ENCODE measurements at regions of chr2 and their contacts with region 1.

Region 1: GRCh38 chr2:203740780-203741281 is 34.4 kb downstream of the CD28 start:
- DNase-seq: peak; percentile 66
- ATAC-seq: peak; percentile 64
- H3K4me3 Mint-ChIP-seq: peak overlapping the region; percentile 54
- H3K27ac Mint-ChIP-seq: peak overlapping the region; percentile 99
- H3K4me1 Mint-ChIP-seq: peaks cover 88% of the 10 kb centered on the region
- H3K27me3 Mint-ChIP-seq: no peaks in the 10 kb centered on the region
- CTCF ChIP-seq: no peak

Region 2: GRCh38 chr2:203446071-203446481 is 294.8 kb before region 1 on chr2:
- CTCF ChIA-PET with region 1: no interaction called
- POLR2A ChIA-PET with region 1: no interaction called
- intact Hi-C with region 1: no loop called
- DNase-seq: no peak
- ATAC-seq: no peak
- H3K4me3 Mint-ChIP-seq: no peak overlapping the region
- H3K27ac Mint-ChIP-seq: no peak overlapping the region
- H3K4me1 Mint-ChIP-seq: peaks cover 6% of the 10 kb centered on the region
- H3K27me3 Mint-ChIP-seq: no peaks in the 10 kb centered on the region
- CTCF ChIP-seq: no peak

Region 3: DNA sequence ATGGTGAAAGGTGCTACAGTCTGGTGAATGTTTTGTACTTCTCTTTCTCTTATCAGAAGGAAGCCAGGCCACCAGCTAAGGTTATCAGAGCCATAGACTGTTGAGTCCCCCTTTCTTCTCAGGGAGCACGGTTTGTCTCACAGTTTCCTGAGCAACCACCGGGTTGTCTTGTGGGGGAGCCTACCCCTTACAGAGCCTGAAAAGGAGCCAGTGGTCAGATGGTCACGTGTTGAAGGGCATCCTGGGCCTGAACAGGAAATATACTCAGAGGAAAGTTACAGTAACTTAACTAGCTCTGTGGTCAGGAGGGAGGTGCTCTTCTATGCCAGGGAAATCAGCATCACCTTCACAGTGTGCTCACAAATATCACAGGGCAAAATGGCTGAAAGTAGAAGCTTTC is 22.7 kb before region 1 on chr2:
- CTCF ChIA-PET with region 1: interaction called, 15 read pairs
- POLR2A ChIA-PET with region 1: interaction called, 184 read pairs
- intact Hi-C with region 1: no loop called
- DNase-seq: peak; percentile 90
- ATAC-seq: peak; percentile 80
- H3K4me3 Mint-ChIP-seq: peak overlapping the region; percentile 43
- H3K27ac Mint-ChIP-seq: peak overlapping the region; percentile 88
- H3K4me1 Mint-ChIP-seq: peaks cover 96% of the 10 kb centered on the region
- H3K27me3 Mint-ChIP-seq: no peaks in the 10 kb centered on the region
- CTCF ChIP-seq: no peak

Region 4: GRCh38 chr2:203751685-203752271 is 10.9 kb after region 1 on chr2:
- CTCF ChIA-PET with region 1: interaction called, 10 read pairs
- POLR2A ChIA-PET with region 1: interaction called, 27 read pairs
- intact Hi-C with region 1: no loop called
- DNase-seq: no peak
- ATAC-seq: no peak
- H3K4me3 Mint-ChIP-seq: no peak overlapping the region
- H3K27ac Mint-ChIP-seq: peak overlapping the region; percentile 66
- H3K4me1 Mint-ChIP-seq: peaks cover 49% of the 10 kb centered on the region
- H3K27me3 Mint-ChIP-seq: no peaks in the 10 kb centered on the region
- CTCF ChIP-seq: no peak

Region 5: DNA sequence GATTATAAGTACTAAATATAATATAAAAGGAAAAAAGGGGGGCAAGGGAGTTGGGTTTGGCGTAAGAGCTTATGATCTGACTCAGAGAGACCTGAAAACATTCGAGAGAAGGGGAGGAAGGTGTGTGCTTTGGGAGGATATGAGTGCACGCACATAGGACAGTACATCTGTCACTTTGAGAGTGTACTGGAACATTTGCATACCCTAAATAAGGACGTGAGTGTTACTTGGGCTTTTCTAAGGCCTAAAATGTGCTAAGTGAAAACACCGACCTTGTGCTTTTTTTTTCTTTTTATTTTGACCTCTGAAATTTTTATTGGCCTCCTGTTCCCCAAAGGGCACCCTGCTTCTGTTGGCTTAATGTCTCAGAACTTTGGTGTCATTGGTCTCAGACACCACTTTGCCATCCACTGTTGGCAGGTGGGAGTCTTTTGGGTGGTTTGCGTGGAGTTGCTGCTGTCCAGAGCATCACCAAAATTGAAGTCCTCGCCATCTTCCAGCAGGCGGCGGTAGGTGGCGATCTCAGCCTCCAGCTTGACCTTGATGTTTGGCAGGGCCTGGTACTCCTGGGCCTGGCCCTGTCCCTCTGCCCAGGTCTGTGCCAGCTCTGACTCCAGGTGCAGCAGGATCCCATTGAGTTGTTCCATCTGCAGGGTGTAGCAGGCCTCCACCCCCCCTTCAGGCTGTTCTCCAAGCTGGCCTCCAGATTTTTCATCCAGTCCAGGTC is 23.3 kb after region 1 on chr2:
- CTCF ChIA-PET with region 1: interaction called, 4 read pairs
- POLR2A ChIA-PET with region 1: interaction called, 21 read pairs
- intact Hi-C with region 1: no loop called
- DNase-seq: no peak
- ATAC-seq: peak; percentile 93
- H3K4me3 Mint-ChIP-seq: peak overlapping the region; percentile 16
- H3K27ac Mint-ChIP-seq: peak overlapping the region; percentile 93
- H3K4me1 Mint-ChIP-seq: peaks cover 68% of the 10 kb centered on the region
- H3K27me3 Mint-ChIP-seq: no peaks in the 10 kb centered on the region
- CTCF ChIP-seq: no peak

Region 6: DNA sequence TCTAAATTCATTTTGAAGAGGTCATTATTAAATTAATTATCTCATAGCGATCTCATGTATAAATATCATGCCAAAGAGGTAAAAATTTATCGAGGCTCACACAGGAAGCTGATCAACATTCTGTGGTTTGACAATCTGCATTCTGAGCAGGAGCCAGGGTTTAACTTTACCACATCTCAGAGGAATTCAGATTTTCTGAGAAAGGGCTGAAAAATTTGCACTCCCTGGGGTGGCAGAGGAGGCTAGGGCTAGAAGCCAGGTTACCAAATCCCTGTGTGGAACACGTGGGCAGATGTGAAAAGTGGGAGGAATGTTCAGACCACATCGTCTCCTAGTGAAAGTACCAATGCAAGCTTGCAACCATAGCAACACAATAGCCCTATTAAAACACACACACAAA is 63.2 kb after region 1 on chr2:
- CTCF ChIA-PET with region 1: interaction called, 5 read pairs
- POLR2A ChIA-PET with region 1: interaction called, 35 read pairs
- intact Hi-C with region 1: loop called (anchors 1 kb)
- DNase-seq: peak; percentile 72
- ATAC-seq: peak; percentile 47
- H3K4me3 Mint-ChIP-seq: no peak overlapping the region
- H3K27ac Mint-ChIP-seq: peak overlapping the region; percentile 88
- H3K4me1 Mint-ChIP-seq: peaks cover 87% of the 10 kb centered on the region
- H3K27me3 Mint-ChIP-seq: no peaks in the 10 kb centered on the region
- CTCF ChIP-seq: no peak

Region 7: GRCh38 chr2:203840655-203841205 is 99.9 kb after region 1 on chr2:
- CTCF ChIA-PET with region 1: no interaction called
- POLR2A ChIA-PET with region 1: no interaction called
- intact Hi-C with region 1: no loop called
- DNase-seq: peak; percentile 16
- ATAC-seq: no peak
- H3K4me3 Mint-ChIP-seq: no peak overlapping the region
- H3K27ac Mint-ChIP-seq: no peak overlapping the region
- H3K4me1 Mint-ChIP-seq: peaks cover 21% of the 10 kb centered on the region
- H3K27me3 Mint-ChIP-seq: no peaks in the 10 kb centered on the region
- CTCF ChIP-seq: no peak

Region 8: DNA sequence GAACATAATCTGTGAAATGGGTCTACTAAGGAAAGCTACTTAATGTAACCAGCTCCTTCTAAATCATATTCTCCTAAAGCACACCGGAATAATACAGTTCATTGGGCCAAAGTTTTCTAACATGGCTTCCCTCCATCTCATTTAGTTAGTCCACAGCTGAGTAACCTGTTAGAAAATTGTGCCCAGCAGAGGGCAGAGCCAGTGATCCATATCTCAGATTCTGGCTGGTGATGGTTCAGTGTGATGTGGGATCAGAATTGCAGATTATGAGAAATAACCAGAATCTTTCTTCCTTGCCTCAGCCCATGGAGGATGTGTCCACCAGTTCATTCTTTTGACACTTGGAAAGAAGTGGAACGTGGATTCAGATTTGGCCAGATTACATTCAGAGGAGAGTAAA is 117.3 kb after region 1 on chr2:
- CTCF ChIA-PET with region 1: no interaction called
- POLR2A ChIA-PET with region 1: no interaction called
- intact Hi-C with region 1: no loop called
- DNase-seq: peak; percentile 55
- ATAC-seq: no peak
- H3K4me3 Mint-ChIP-seq: no peak overlapping the region
- H3K27ac Mint-ChIP-seq: no peak overlapping the region
- H3K4me1 Mint-ChIP-seq: peaks cover 67% of the 10 kb centered on the region
- H3K27me3 Mint-ChIP-seq: no peaks in the 10 kb centered on the region
- CTCF ChIP-seq: no peak